ENCODE measurements at regions of chr11 and their contacts with region 1.

Region 1: GRCh38 chr11:44727373-44728287 is 868 bp downstream of the TSPAN18 start:
- DNase-seq: peak; percentile 87 to 92
- ATAC-seq: peak; percentile 83 to 92 (median 90)
- H3K4me3 ChIP-seq: peak overlapping the region; percentile 39 to 98 (median 84)
- H3K27ac ChIP-seq: peak overlapping the region; percentile 84 to 95 (median 92)
- H3K4me1 ChIP-seq: peaks cover 13 to 68% (median 59%) of the 10 kb centered on the region in 9 donors
- H3K27me3 ChIP-seq: peaks cover 0 to 35% (median 0%) of the 10 kb centered on the region in 7 donors
- CTCF ChIP-seq: peak; percentile 90 to 98 (median 96)

Region 2: DNA sequence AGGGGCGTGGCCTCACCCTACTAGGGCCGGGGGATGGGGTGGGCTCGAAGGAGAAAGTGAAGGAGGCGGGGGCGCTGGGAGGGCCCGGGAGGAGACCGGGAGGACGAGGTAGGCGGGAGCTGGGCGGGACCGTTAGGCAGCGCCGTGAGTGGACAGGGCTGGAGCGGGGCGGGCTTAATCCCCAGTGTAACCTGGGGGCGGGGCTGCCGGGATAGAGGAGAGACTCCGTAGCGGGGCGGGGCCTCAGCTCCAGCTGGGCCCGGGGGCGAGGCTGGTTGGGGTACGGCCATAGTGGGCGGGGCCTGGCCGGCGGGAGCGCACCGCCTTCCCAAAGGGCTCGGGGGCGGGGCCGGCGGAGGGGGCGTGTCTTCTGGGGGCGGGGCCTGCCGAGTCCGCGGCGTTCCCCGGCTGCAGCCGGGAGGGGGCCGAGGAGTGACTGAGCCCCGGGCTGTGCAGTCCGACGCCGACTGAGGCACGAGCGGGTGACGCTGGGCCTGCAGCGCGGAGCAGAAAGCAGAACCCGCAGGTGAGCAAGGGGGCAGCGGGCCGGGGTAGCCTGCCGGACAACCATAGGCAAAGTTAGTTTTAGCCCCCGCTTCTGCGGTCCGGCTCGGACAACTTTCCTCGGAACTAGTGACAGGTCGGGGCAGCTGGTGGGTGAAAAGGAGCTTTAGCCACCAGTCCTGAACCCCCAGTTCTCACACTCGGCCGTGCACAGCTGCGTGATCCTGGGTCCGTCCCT is 162.2 kb before region 1 on chr11 and contains the start of gene CD82:
- intact Hi-C with region 1: loop called in 1 of 10 experiments (anchors 10 kb)
- DNase-seq: peak; percentile 100
- ATAC-seq: peak; percentile 95 to 98 (median 96)
- H3K4me3 ChIP-seq: peak within 1 kb of the TSS; percentile 48 to 80 (median 64)
- H3K27ac ChIP-seq: peak within 1 kb of the TSS; percentile 91 to 99 (median 96)
- H3K4me1 ChIP-seq: peaks cover 15 to 70% (median 53%) of the 10 kb centered on the region in 9 donors
- H3K27me3 ChIP-seq: no peaks in the 10 kb centered on the region
- CTCF ChIP-seq: peak; percentile 7 to 58 (median 41)
- total RNA-seq, gene CD82: 25.8 to 66.7 (median 35.2) TPM

Region 3: DNA sequence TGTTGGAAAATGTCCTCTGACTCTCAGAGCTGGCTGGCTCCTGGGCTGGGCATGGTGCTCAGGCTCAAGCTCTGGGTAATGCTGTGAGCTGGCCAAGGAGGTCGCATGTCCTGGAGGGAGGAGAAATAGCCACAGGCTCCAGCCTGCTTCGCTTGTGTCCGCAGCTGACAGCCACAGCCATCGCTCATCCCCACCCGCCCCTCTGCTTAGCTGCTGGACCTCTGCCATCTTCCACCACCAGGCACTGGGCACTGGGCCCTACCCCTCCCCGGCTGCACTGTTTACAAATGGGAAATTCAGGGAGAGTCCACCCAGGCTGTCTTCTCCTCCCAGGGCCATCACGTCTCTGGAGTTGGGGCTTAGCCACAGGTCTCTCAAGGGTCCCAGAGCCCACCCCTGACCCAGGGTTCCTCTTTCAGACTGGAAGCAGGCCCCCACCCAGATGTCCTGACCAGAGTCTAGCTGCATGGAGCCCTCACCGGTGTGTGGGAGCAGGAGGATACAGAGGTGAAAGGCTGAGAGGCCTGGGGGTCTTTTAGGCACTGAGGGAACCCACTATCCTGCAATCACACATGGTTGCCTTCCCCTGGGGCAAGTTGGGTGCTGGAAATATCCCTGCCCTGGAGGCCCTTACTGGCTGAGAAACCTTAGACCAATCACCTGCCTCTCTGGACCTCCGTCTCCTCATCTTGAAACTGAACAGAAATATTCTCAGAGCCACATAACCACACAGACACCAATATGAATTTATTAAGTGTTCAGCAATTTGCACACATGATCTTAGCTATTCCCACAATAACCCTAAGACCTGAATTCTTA is 99.5 kb before region 1 on chr11:
- intact Hi-C with region 1: loop called in 8 of 10 experiments (anchors 2 to 10 kb)
- DNase-seq: peak; percentile 77 to 83
- ATAC-seq: peak; percentile 71 to 89 (median 82)
- H3K4me3 ChIP-seq: no peak overlapping the region
- H3K27ac ChIP-seq: peak overlapping the region; percentile 17 to 84 (median 72)
- H3K4me1 ChIP-seq: peaks cover 12 to 73% (median 54%) of the 10 kb centered on the region in 9 donors
- H3K27me3 ChIP-seq: no peaks in the 10 kb centered on the region
- CTCF ChIP-seq: no peak

Region 4: DNA sequence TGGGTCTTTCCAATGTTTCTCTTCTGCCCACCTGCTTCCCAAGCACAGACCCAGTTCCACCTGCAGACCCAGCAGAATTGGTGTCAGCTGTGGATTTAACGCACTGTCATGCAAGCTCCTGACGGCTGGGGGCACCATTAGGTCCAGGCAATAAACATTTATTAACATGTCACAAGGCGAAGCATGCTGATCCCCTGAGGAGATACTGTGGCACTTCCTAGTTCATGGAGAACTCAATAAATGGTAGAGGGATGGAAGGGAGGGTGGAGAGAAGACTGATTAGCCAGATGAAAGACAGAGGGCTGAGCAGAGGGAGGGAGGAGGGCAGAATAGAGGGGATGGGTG is 69.2 kb before region 1 on chr11:
- intact Hi-C with region 1: loop called in 1 of 10 experiments (anchors 2 kb)
- DNase-seq: no peak
- ATAC-seq: no peak
- H3K4me3 ChIP-seq: no peak overlapping the region
- H3K27ac ChIP-seq: no peak overlapping the region
- H3K4me1 ChIP-seq: peaks cover 0 to 33% (median 3%) of the 10 kb centered on the region in 9 donors
- H3K27me3 ChIP-seq: no peaks in the 10 kb centered on the region
- CTCF ChIP-seq: peak in 8 of 9 donors; percentile 12 to 39 (median 30)

Region 5: DNA sequence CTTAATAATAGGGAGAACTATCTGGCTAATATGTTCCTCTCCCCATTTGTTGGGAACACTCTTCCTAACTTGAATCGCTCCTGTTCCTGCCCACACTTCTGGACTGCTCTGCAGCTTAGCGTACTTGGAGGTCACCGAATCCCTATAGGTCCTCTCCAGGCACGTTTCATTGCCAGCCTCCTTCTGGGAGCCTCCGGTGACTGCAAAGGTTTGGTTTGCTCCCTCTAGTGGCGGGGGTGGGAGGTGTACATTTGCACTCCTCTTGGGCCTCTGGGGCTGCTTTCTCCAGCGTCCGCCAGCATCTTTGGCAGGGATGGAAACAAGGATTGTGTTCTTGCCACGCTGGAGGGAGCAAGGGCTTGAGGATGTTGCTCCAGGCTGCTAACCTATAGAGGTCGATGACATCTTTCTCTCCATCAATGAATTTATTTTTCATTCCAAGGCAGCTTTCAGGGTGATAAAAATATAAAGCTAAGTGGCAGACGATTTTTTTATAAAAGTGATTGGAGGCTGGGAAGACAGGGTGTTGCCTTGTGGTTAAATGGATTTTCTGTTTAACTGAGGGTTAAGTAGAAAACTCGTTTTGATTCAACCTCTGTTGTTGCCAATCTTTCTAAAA is 47.8 kb after region 1 on chr11:
- intact Hi-C with region 1: loop called in 7 of 10 experiments (anchors 1 to 10 kb)
- DNase-seq: peak; percentile 61 to 63
- ATAC-seq: peak; percentile 6 to 70 (median 47)
- H3K4me3 ChIP-seq: no peak overlapping the region
- H3K27ac ChIP-seq: peak overlapping the region in 9 of 10 donors; percentile 71 to 89 (median 82)
- H3K4me1 ChIP-seq: peaks cover 31 to 99% (median 82%) of the 10 kb centered on the region in 9 donors
- H3K27me3 ChIP-seq: no peaks in the 10 kb centered on the region
- CTCF ChIP-seq: peak; percentile 47 to 76 (median 67)

Region 6: DNA sequence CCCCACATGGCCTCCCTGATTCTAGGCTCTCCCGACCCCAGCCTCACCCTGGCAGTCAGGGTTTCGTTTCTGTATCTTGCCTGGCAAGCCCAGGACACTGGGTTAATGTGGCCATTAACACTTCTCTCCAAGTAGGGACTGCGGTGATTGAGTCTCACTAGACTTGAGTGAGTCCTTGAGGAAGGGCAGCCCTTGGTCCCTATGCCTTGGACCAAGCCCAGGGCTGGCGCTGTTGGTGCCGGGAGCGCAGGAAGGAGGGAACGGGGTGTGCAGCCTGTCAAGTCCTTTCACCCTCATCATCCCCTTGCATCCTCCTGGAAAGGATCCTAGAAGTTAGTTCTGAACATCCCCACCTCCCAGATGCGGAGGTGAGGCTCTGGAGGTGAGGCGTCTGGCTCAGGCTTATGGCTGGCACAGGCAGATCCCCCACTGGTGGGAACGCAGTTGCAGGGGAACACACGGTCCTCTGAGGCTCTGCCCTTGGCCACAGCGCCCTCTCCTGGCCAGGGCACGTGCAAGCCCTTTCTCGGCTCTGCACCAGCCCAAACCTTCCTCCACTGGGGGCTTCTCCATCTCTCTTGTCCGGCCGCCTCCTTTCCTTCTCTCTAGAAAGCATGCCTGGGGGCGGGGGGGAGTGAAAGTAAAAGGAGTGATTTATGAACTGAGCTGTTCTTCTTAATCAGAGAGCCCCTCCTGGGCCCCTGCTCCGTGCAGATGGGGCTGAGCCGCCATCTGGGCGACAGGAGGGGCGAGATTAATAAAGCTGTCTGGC is 166.4 kb after region 1 on chr11:
- intact Hi-C with region 1: loop called (anchors 1 to 10 kb)
- DNase-seq: peak; percentile 73 to 82
- ATAC-seq: peak; percentile 90 to 95 (median 92)
- H3K4me3 ChIP-seq: no peak overlapping the region
- H3K27ac ChIP-seq: peak overlapping the region in 9 of 10 donors; percentile 17 to 68 (median 42)
- H3K4me1 ChIP-seq: peaks cover 0 to 39% (median 18%) of the 10 kb centered on the region in 9 donors
- H3K27me3 ChIP-seq: no peaks in the 10 kb centered on the region
- CTCF ChIP-seq: peak; percentile 78 to 94 (median 90)

Region 7: DNA sequence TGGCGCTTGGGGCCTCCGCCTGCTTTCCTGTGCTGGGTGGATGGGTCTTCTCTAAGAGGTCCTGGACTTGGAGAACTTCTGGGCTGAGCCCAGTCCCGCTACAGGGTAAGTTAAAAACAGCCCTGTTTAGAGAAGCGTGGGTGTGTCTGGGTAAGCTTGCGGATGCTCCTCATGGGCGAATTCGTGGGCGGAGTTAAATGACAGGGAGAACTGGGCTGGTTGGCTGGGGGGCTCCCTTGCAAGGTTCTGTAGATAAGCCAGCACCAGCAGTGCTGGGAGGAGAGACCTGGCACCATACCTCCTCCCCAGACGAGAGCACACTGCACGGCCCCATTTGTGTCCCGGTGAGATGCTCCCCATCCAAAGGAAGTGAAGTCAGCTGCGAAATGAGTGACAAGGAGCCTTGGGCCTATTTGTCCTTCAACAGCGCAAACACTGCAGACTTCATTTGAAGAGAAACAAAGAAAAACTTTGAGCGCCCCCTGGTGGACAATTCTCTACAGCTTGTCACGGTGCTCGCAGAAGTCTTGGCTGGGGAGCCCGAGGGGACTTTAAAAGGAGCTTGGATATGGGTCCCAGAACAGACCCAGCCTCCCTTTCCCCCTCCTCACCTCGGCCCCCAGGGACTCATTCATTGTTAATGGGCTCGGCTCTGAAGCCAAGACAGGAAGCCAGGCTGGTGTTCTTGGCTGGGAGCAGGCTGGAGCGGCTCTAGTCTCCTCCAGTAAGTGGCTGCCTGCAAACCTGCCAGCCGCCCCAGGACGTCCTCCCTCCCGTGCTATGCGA is 183.6 kb after region 1 on chr11:
- intact Hi-C with region 1: loop called in 8 of 10 experiments (anchors 2 to 5 kb)
- DNase-seq: peak; percentile 67 to 95
- ATAC-seq: peak; percentile 73 to 93 (median 82)
- H3K4me3 ChIP-seq: peak overlapping the region in 3 of 10 donors; percentile 2 to 19 (median 10)
- H3K27ac ChIP-seq: peak overlapping the region in 8 of 10 donors; percentile 6 to 62 (median 30)
- H3K4me1 ChIP-seq: peaks cover 10 to 68% (median 37%) of the 10 kb centered on the region in 9 donors
- H3K27me3 ChIP-seq: no peaks in the 10 kb centered on the region
- CTCF ChIP-seq: peak; percentile 83 to 95 (median 91)